BJ (cell line): ENCODE measurements at regions of chr5 and their contacts with region 1.

Region 1: DNA sequence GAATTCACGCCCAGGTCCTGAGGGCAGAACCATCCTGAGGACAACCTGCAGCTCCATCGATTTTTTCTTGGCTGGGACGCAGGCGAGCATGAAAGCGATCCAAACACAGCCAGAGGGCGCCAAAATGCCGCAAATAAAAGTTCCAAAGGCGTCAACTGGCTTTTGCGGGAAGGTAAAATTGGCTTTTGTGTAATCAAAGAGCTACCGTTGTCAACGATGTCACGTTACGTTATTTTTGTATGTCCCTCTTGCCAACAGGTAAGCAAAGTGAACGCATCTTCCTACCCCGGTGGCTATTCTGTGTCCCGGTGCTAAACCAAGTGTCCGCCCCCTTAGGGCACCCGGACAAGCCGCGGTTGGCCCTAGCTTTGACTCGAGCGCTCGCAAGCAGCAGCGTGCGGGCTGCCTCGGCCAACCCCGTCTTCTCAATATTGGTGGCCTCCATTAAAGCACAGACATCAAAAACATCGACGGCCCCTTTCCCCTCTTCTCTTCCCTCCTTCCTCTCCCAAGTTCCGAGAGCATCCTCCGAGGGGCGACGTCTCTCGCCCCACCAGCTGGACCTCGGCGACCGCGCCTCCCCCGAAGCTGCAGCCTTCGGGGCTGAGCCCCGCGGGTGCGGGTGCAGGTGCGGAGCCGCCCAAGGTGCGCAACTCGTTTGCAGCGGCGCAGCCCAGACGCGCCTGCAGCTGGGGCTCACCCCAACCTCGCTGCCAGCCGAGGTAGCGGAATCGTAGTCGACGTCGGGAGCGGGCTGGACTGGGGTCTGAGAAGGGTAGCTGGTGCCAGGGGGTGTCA is 1.1 kb upstream of the BASP1 start:
- DNase-seq: no peak
- H3K4me3 ChIP-seq: peak overlapping the region; percentile 96
- H3K27me3 ChIP-seq: no peaks in the 10 kb centered on the region
- CTCF ChIP-seq: peak; percentile 82

Region 2: GRCh38 chr5:18281682-18282557 is 1065.5 kb after region 1 on chr5:
- CTCF ChIA-PET with region 1: interaction called, 61 read pairs
- POLR2A ChIA-PET with region 1: interaction called, 4 read pairs
- DNase-seq: peak; percentile 6
- H3K4me3 ChIP-seq: no peak overlapping the region
- H3K27me3 ChIP-seq: no peaks in the 10 kb centered on the region
- CTCF ChIP-seq: peak; percentile 47

Region 3: DNA sequence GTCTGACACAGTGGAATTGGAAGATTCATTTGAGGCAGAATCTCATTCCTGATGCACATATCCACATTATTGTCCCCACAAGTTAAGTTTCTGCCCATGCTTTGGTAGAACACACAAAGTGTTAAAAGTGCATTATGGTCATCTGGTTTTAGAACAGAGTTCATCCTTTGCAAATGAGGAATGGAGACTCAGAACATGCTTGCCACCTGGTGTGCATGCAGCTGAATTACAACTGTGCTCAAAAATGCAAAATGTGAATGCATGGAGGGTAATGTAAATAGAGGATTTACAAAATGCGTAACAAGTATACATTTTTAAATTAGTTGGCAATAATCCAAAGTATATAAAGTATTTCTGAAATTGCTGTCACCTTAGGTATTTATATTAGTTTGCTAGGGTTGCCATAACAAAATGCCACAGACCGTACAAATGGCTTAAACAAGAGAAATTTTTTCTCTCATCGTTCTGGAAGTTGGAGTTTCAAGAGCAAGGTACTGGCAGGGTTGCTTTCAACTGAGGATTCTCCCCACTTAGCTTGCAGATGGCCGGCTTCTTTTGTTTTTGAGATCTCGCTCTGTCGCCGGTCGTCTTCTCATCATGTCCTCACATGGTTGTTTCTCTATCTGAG is 1089.0 kb after region 1 on chr5:
- CTCF ChIA-PET with region 1: interaction called, 101 read pairs
- POLR2A ChIA-PET with region 1: no interaction called
- DNase-seq: no peak
- H3K4me3 ChIP-seq: no peak overlapping the region
- H3K27me3 ChIP-seq: no peaks in the 10 kb centered on the region
- CTCF ChIP-seq: peak; percentile 74

Region 4: GRCh38 chr5:18314192-18314778 is 1097.9 kb after region 1 on chr5:
- CTCF ChIA-PET with region 1: interaction called, 41 read pairs
- POLR2A ChIA-PET with region 1: interaction called, 3 read pairs
- DNase-seq: no peak
- H3K4me3 ChIP-seq: no peak overlapping the region
- H3K27me3 ChIP-seq: no peaks in the 10 kb centered on the region
- CTCF ChIP-seq: peak; percentile 40